ENCODE measurements at regions of chr18 and their contacts with region 1.

Region 1: DNA sequence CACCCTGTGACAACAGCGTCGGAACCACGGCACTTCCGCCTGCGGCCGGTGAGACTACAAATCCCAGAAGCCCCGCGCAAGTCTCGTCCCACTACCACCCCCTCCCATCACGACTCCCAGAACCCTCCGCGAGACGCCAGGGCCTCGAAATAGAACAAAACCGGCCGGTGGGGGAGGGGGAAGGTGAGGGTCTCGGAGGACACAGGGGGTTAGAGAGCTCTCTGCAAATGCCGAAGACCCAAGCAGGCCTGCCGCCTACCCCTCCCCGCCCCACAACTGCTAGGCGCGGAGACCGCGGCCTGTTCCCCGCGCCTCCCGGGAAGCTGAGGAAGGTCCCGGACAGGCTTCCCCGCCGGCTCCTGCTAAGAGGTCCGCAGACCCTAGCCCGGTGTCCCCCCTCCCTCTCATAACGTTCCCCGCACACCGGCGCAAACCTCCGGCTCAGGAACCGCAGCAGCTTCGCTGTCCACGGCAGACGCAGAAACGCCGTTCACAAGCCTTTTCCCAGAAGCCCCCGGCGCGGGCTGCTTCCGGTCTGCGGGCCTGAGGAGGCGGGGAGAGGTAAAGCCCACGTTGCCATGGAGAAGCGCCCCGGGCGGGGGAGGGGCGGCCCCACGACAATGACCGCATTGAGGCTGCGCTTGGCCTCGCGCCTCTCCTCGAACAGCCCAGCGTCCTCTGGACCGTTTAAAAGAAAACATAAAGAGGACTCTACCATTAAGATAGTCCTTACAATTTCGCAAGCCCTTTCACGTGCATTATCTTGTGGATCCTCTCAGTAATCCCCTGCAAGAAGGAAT is at the start of gene ZNF24:
- DNase-seq: peak; percentile 99
- ATAC-seq: peak; percentile 99
- total RNA-seq, gene ZNF24: 50.2 TPM

Region 2: DNA sequence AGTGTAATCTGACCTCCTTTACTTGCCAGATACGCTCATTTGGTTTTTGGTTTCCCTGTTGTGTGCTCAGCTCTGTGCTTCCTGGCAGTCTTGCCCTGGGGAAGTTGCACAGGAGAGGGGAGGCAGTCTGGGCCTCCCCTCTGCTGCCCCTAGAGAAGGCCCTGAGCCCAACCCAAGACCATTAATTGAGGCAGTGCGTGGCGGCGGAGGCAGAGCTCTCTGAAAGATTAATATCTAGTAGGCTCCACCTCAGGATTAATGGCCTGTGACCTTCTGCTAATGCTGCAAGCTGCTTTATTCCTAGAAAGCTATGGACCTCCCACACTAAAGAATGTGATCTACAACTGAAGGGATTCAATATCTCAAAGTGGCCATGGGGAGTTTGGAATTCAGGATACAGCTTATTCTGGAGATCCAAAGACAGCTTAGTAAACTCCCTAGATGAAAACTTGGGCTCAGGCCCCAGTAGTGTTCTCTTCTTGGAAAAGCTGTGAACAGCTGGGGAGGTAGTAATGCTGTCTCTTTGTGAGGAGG is 344.3 kb before region 1 on chr18:
- intact Hi-C with region 1: no loop called
- DNase-seq: peak; percentile 68
- ATAC-seq: peak; percentile 54

Region 3: GRCh38 chr18:35290073-35290735 is 53.9 kb before region 1 on chr18 and contains the start of gene ZSCAN30:
- intact Hi-C with region 1: loop called (anchors 1 kb)
- DNase-seq: peak; percentile 95
- ATAC-seq: peak; percentile 99
- total RNA-seq, gene ZSCAN30: 9.5 TPM